ENCODE measurements at regions of chr22 and their contacts with region 1.

Region 1: DNA sequence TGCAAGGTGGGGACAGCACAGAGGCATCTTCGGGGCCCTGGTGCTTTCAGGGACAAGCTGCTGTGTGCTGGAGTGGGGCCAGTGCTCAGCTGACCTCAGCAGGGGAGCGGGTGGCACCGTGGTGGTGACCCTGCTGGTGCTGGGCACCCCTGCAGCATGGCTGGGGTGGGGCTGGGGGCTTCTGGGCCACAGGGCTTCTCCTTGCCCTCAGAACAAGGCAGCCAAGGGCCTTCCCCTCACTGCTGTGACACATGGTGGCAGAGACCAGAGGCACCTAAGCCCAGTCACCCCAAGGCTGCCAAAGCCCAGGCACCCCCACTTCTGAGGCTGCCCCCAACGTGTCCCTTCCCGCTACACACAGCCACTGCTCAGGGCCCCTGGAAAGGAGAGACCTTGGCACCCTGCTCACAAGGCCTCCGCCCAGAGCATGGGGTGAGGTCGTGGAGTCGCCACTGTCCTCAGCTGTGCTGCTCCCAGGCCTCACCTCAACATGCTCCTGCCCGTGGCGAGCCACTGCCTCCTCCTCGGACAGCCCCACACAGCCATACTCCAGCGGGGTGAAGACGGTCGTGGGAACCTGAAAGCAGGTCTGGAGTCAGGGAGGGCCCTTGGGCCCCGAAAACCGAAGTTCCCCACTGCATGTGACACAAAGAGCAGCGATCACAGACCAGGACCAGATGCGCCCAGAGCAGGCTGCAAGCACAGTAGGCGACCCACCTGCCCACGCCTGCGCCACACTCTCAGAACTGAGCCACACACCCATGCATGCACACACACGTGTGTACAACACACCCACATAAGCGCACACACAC is 25.2 kb upstream of the GNB1L start:
- DNase-seq: no peak
- H3K4me3 ChIP-seq: peak overlapping the region; percentile 8 to 80 (median 57)
- H3K27ac ChIP-seq: peak overlapping the region; percentile 95
- H3K4me1 ChIP-seq: peaks cover 76% of the 10 kb centered on the region
- H3K27me3 ChIP-seq: no peaks in the 10 kb centered on the region
- CTCF ChIP-seq: no peak
- POLR2A ChIP-seq: no peak

Region 2: GRCh38 chr22:19844377-19845053 is 35.4 kb before region 1 on chr22:
- CTCF ChIA-PET with region 1: interaction called, 3 read pairs
- POLR2A ChIA-PET with region 1: interaction called, 3 read pairs
- dilution Hi-C with region 1: no loop called
- intact Hi-C with region 1: loop called (anchors 2 kb)
- DNase-seq: peak; percentile 77
- H3K4me3 ChIP-seq: no peak overlapping the region
- H3K27ac ChIP-seq: peak overlapping the region; percentile 80
- H3K4me1 ChIP-seq: peaks cover 32% of the 10 kb centered on the region
- H3K27me3 ChIP-seq: no peaks in the 10 kb centered on the region
- CTCF ChIP-seq: peak; percentile 17 to 39
- POLR2A ChIP-seq: no peak

Region 3: DNA sequence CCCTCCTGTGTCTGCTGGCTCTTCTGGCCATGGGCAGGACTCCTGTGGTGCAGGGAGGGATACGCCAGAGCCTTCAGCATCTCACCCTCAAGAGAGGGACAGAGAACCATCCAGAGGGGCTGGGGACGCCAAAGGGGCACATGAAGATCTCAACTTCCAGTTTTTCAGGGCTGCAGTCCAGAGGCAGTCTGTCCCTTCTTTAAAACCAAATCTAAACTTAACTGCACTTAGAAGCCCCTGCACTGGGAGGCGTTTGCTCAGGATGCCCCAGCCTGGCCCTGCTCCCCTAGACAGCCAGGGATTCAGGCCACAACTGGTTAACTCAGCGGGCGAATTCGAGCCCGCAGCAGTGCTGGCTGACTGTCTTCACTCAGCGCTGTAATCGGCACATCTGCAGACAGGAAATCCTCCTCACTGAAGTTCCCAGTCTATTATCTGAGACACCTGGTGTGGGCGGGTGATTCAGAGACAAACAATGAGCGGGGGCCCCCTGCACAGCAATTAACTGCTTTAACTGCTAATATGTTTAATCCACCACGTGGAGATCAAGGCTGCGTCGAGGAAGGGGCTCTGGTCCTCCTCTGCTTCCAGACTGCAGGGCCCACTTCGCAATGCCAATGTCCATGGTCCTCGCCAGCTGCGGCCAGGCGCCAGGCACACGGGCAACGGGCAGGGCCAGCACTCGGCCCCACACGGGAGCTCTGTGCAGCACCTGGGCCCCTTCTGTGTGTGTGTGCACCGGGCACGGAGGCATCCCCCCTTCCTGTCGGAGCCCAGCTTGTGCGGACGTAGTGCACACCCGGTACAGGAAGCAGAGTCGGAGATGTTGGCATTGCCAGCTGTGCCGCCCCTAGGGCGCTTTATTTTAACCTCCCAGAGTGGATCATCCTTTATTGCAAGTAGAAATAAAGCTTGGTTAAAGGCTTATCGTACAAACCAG is 11.7 kb after region 1 on chr22:
- CTCF ChIA-PET with region 1: interaction called, 6 read pairs
- POLR2A ChIA-PET with region 1: interaction called, 9 read pairs
- dilution Hi-C with region 1: no loop called
- intact Hi-C with region 1: loop called (anchors 1 kb)
- DNase-seq: peak; percentile 90
- H3K4me3 ChIP-seq: no peak overlapping the region
- H3K27ac ChIP-seq: peak overlapping the region; percentile 83
- H3K4me1 ChIP-seq: peaks cover 69% of the 10 kb centered on the region
- H3K27me3 ChIP-seq: no peaks in the 10 kb centered on the region
- CTCF ChIP-seq: no peak
- POLR2A ChIP-seq: peak; percentile 87

Region 4: GRCh38 chr22:19948057-19948760 is 68.3 kb after region 1 on chr22:
- CTCF ChIA-PET with region 1: no interaction called
- POLR2A ChIA-PET with region 1: no interaction called
- dilution Hi-C with region 1: no loop called
- intact Hi-C with region 1: loop called (anchors 2 kb)
- DNase-seq: no peak
- H3K4me3 ChIP-seq: no peak overlapping the region
- H3K27ac ChIP-seq: peak overlapping the region; percentile 86
- H3K4me1 ChIP-seq: peaks cover 46% of the 10 kb centered on the region
- H3K27me3 ChIP-seq: no peaks in the 10 kb centered on the region
- CTCF ChIP-seq: no peak
- POLR2A ChIP-seq: no peak

Region 5: DNA sequence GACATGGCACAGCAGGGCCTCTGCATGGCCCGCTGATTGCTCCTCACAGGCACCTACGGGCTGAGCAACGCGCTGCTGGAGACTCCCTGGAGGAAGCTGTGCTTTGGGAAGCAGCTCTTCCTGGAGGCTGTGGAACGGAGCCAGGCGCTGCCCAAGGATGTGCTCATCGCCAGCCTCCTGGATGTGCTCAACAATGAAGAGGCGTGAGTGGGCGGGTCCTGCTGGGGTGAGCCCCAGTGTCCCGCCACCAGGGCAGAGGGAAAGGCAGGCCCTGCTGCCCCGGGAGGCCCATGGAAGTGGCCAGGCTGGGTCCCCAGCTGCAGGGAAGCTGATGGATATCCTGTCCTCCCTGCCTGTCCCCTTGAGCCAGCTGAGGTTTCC is 181.6 kb after region 1 on chr22:
- CTCF ChIA-PET with region 1: no interaction called
- POLR2A ChIA-PET with region 1: no interaction called
- dilution Hi-C with region 1: no loop called
- intact Hi-C with region 1: no loop called
- DNase-seq: peak; percentile 6
- H3K4me3 ChIP-seq: no peak overlapping the region
- H3K27ac ChIP-seq: peak overlapping the region; percentile 2
- H3K4me1 ChIP-seq: peaks cover 12% of the 10 kb centered on the region
- H3K27me3 ChIP-seq: no peaks in the 10 kb centered on the region
- CTCF ChIP-seq: no peak
- POLR2A ChIP-seq: no peak

Region 6: GRCh38 chr22:20174785-20175596 is 295.1 kb after region 1 on chr22:
- CTCF ChIA-PET with region 1: no interaction called
- POLR2A ChIA-PET with region 1: no interaction called
- dilution Hi-C with region 1: no loop called
- intact Hi-C with region 1: no loop called
- DNase-seq: no peak
- H3K4me3 ChIP-seq: no peak overlapping the region
- H3K27ac ChIP-seq: no peak overlapping the region
- H3K4me1 ChIP-seq: no peaks in the 10 kb centered on the region
- H3K27me3 ChIP-seq: no peaks in the 10 kb centered on the region
- CTCF ChIP-seq: no peak
- POLR2A ChIP-seq: no peak

Measured in endothelial cell of umbilical vein (primary cell).